ENCODE measurements at regions of chr2 and their contacts with region 1.

Region 1: DNA sequence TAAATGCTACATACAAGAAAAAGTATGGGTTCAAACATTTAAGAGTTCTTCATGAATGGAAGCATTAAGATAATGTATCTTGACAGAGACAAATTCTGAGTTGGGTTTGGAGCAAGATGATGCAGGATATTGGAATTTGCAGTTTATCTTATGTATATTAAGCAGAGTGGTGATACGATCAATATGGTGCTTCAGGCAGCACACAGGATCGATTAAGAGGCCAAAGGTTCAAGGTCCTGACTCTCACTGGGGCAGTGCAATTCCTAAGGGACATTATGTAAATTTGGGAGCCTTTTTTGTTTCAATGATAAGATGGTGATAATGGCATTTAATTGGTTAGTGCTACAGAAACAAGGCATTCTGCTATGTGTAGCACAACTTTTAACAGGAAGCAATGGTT is 381.9 kb downstream of the KCNJ3 start:
- DNase-seq: no peak
- ATAC-seq: no peak
- H3K4me3 ChIP-seq: no peak overlapping the region
- H3K27ac ChIP-seq: no peak overlapping the region
- H3K4me1 ChIP-seq: no peaks in the 10 kb centered on the region
- H3K27me3 ChIP-seq: no peaks in the 10 kb centered on the region
- CTCF ChIP-seq: no peak

Region 2: DNA sequence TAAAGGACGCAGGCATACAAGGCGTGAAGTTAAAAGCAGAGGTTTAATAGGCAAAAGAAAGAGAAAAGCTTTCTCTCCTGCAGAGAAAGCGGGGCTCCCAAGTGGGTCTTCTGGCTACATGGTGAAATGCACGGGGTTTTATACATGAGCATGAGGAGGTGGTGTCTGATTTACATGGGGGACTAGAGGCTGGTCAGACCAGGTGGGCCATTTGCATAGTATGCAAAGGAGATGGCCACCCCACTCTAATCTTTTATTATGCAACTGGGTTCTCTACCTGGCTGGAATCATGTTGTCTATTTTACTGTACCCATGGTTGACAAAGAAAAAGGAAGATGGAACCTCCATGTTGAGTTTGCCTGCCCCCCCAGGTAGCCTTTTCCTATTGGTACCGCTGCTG is 25.7 kb before region 1 on chr2:
- intact Hi-C with region 1: loop called in 1 of 10 experiments (anchors 2 kb)
- DNase-seq: no peak
- ATAC-seq: no peak
- H3K4me3 ChIP-seq: no peak overlapping the region
- H3K27ac ChIP-seq: no peak overlapping the region
- H3K4me1 ChIP-seq: no peaks in the 10 kb centered on the region
- H3K27me3 ChIP-seq: no peaks in the 10 kb centered on the region
- CTCF ChIP-seq: no peak

Measured in heart right ventricle (tissue), 16 donors.